HepG2 (cell line): ENCODE measurements at regions of chr4 and their contacts with region 1.

Region 1: GRCh38 chr4:184168406-184169019 is 49.2 kb downstream of the ENPP6 start:
- DNase-seq: peak; percentile 26
- ATAC-seq: peak; percentile 98
- H3K4me3 ChIP-seq: no peak overlapping the region
- H3K27ac ChIP-seq: no peak overlapping the region
- H3K4me1 ChIP-seq: no peaks in the 10 kb centered on the region
- H3K27me3 ChIP-seq: peaks cover 0 to 8% of the 10 kb centered on the region in 2 experiments; a peak in 2 of 5 replicates
- CTCF ChIP-seq: peak; percentile 95
- EP300 ChIP-seq: no peak
- POLR2A ChIP-seq: no peak
- RAD21 ChIP-seq: peak; percentile 96

Region 2: DNA sequence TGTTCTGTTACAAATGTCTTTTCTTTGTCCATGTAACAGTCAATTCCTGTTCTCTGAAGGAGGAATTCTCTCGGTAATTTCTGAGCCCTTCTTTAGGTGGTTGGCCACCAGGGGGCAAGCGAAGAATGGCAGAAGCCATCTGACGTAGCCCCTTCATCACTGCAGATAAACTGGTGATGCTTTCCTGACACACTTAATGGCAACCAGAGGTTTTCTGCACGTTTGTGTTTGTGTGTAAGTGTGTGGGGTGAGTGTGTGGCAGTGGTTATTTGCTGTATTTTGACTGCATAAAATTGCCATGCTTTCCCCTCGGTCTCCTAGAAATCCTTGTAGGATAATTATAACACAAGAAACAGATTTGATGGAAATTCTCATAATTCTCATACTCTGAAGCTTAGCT is 328.2 kb before region 1 on chr4:
- CTCF ChIA-PET with region 1: interaction called, 60 read pairs
- POLR2A ChIA-PET with region 1: no interaction called
- in situ Hi-C with region 1: loop called (anchors 5 kb)
- intact Hi-C with region 1: loop called (anchors 1 kb)
- DNase-seq: peak; percentile 60
- ATAC-seq: peak; percentile 85
- H3K4me3 ChIP-seq: no peak overlapping the region
- H3K27ac ChIP-seq: no peak overlapping the region
- H3K4me1 ChIP-seq: no peaks in the 10 kb centered on the region
- H3K27me3 ChIP-seq: no peaks in the 10 kb centered on the region
- CTCF ChIP-seq: peak; percentile 91
- EP300 ChIP-seq: no peak
- POLR2A ChIP-seq: no peak
- RAD21 ChIP-seq: peak; percentile 82

Region 3: GRCh38 chr4:184147858-184148737 is 20.4 kb before region 1 on chr4:
- CTCF ChIA-PET with region 1: no interaction called
- POLR2A ChIA-PET with region 1: no interaction called
- in situ Hi-C with region 1: no loop called
- intact Hi-C with region 1: no loop called
- DNase-seq: no peak
- ATAC-seq: no peak
- H3K4me3 ChIP-seq: no peak overlapping the region
- H3K27ac ChIP-seq: no peak overlapping the region
- H3K4me1 ChIP-seq: peaks cover 10% of the 10 kb centered on the region
- H3K27me3 ChIP-seq: peaks cover 1 to 9% of the 10 kb centered on the region in 2 experiments; a peak in 1 of 5 replicates
- CTCF ChIP-seq: no peak
- EP300 ChIP-seq: no peak
- POLR2A ChIP-seq: no peak
- RAD21 ChIP-seq: no peak